ENCODE measurements at regions of chr12 and their contacts with region 1.

Region 1: DNA sequence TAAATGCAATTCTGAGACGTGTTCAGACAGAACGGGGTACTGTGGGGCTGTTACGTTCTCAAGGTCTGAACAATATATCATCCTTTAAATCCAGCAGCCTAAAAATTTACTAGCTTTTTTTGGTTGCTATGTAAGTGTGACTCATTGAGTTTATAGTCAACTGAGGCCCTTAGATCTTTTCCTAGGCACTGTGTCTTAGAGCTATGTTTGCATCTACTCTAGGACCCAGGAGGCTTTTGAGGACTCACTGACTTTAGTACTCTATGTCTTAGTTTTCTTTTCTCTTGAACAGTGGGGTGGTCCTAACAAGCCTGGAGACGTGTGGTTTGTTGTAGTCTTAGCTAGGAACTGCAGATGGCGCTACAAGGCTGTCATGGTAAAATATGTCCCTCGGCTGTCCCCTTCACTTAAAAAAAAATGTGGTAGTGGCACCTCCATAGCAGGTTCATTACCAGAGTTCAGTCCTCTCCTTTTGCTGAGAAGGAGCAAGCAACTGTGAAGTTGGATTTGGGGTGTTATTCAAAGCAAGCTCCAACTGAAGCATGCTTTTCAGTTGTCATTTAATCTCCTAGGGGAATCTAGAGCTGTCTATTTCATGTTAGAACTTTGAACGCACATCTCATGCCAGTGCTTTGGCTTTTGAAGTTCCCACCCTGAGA is 8.7 kb upstream of the SPATS2 start:
- DNase-seq: peak; percentile 63 to 70 (median 65)
- H3K4me3 ChIP-seq: no peak overlapping the region
- H3K4me3 Mint-ChIP-seq: no peak overlapping the region
- H3K27ac ChIP-seq: no peak overlapping the region
- H3K27ac Mint-ChIP-seq: no peak overlapping the region
- H3K4me1 ChIP-seq: no peaks in the 10 kb centered on the region
- H3K4me1 Mint-ChIP-seq: peaks cover 0 to 5% (median 4%) of the 10 kb centered on the region in 4 donors
- H3K27me3 ChIP-seq: peaks cover 6% of the 10 kb centered on the region
- H3K27me3 Mint-ChIP-seq: peaks cover 20 to 23% of the 10 kb centered on the region in 2 donors

Region 2: GRCh38 chr12:48924617-48925303 is 433.9 kb before region 1 on chr12:
- CTCF ChIA-PET with region 1: no interaction called
- POLR2A ChIA-PET with region 1: no interaction called
- intact Hi-C with region 1: no loop called
- DNase-seq: peak; percentile 79 to 85 (median 81)
- H3K4me3 ChIP-seq: peak overlapping the region; percentile 20 to 97
- H3K4me3 Mint-ChIP-seq: peak overlapping the region; percentile 95 to 98 (median 97)
- H3K27ac ChIP-seq: peak overlapping the region; percentile 95
- H3K27ac Mint-ChIP-seq: peak overlapping the region; percentile 96 to 100 (median 99)
- H3K4me1 ChIP-seq: peaks cover 34% of the 10 kb centered on the region
- H3K4me1 Mint-ChIP-seq: peaks cover 36 to 66% (median 52%) of the 10 kb centered on the region in 4 donors
- H3K27me3 ChIP-seq: no peaks in the 10 kb centered on the region
- H3K27me3 Mint-ChIP-seq: no peaks in the 10 kb centered on the region

Region 3: DNA sequence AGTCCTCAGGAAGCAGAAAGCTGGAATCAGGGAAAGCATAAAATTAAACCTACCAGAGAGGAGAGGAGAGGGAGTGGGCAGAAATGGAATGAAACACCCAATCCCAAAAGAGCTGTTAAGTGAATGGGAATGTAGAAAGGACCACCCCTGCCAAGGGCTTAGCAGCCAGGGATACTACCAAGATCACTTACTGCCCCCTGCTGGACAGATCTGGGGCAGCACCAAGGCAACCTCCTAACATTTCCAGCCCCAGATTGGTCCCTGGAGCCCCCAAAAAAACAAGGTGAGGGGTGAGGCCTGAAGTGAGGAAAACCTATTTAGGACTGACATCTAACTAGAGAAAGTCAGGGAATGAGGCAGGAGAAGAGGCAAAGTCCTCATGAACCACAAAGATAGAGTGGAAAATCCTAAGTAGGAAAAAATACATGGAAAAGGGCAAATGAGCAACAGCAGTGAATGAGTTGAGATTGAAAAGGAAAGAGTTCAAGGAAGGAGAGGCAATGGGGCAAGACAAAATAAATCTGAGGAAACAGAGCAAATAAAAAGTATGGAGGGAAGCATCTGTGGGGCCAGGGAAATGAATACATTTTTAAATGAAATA is 422.1 kb before region 1 on chr12:
- CTCF ChIA-PET with region 1: no interaction called
- POLR2A ChIA-PET with region 1: no interaction called
- intact Hi-C with region 1: no loop called
- DNase-seq: peak; percentile 74 to 82 (median 78)
- H3K4me3 ChIP-seq: no peak overlapping the region
- H3K4me3 Mint-ChIP-seq: no peak overlapping the region
- H3K27ac ChIP-seq: peak overlapping the region; percentile 71
- H3K27ac Mint-ChIP-seq: peak overlapping the region; percentile 86 to 97 (median 95)
- H3K4me1 ChIP-seq: peaks cover 45% of the 10 kb centered on the region
- H3K4me1 Mint-ChIP-seq: peaks cover 31 to 50% (median 38%) of the 10 kb centered on the region in 4 donors
- H3K27me3 ChIP-seq: no peaks in the 10 kb centered on the region
- H3K27me3 Mint-ChIP-seq: no peaks in the 10 kb centered on the region

Region 4: DNA sequence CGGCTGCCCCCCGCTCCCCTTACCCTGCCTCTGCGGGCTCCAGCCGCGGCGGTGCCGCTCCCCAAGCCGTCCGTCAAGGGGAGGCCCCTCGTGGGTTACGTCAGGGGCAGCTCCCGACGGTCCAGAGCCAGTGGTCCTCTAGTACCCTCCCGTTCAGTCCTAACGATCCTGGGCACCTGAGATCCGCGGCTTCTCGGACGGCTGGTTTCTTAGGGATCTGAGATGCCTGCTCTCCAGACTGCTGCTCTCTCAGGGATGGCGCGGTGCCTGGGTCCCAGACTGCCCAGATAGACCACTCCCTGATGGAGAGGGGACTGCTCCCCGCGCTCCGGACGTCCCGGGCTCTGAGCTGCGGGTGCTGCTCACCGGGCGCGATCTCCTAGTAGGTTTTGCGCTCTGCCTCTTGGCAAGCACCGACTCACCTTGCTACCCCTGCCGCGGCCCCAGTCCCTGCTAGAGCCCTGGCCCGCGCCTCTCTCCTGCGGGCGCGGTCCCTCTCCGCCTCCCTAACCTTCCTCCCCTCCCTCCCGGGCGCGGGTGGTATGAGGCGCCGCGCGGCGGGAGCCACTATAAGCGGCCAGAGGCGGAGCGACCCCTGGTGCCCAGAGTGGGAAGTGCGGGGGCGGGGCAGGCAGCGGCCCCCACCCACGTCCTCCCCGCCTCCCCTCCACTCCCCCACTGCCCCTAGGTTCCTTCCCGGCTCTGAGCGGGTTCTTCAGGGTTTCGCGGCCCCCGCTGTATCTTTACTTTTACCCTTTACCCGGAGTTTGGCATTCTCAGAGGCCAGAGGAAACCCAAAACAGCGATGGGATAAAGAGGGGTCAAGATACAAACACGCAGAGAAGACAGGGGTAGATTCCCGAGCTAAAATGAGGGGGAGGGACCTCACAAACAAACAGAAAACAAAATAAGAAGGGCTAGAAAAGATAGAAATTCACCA is 21.7 kb before region 1 on chr12 and contains the start of gene C1QL4:
- CTCF ChIA-PET with region 1: interaction called, 19 read pairs
- POLR2A ChIA-PET with region 1: no interaction called
- intact Hi-C with region 1: no loop called
- DNase-seq: peak; percentile 81 to 87 (median 81)
- H3K4me3 ChIP-seq: peak within 1 kb of the TSS in 1 of 2 donors; percentile 43
- H3K4me3 Mint-ChIP-seq: peak within 1 kb of the TSS; percentile 13 to 86 (median 70)
- H3K27ac ChIP-seq: no peak within 1 kb of the TSS
- H3K27ac Mint-ChIP-seq: peak within 1 kb of the TSS in 2 of 7 donors; percentile 24 to 52
- H3K4me1 ChIP-seq: peaks cover 22% of the 10 kb centered on the region
- H3K4me1 Mint-ChIP-seq: peaks cover 16 to 41% (median 23%) of the 10 kb centered on the region in 4 donors
- H3K27me3 ChIP-seq: peaks cover 37% of the 10 kb centered on the region
- H3K27me3 Mint-ChIP-seq: peaks cover 41 to 63% of the 10 kb centered on the region in 2 donors
- total RNA-seq, gene C1QL4: not detected

Region 5: GRCh38 chr12:49347384-49348237 is 11.0 kb before region 1 on chr12:
- CTCF ChIA-PET with region 1: interaction called, 51 read pairs
- POLR2A ChIA-PET with region 1: no interaction called
- intact Hi-C with region 1: no loop called
- DNase-seq: peak; percentile 70 to 81 (median 75)
- H3K4me3 ChIP-seq: peak overlapping the region; percentile 38 to 57
- H3K4me3 Mint-ChIP-seq: peak overlapping the region; percentile 81 to 92 (median 87)
- H3K27ac ChIP-seq: no peak overlapping the region
- H3K27ac Mint-ChIP-seq: peak overlapping the region in 2 of 7 donors; percentile 65 to 78
- H3K4me1 ChIP-seq: peaks cover 44% of the 10 kb centered on the region
- H3K4me1 Mint-ChIP-seq: peaks cover 15 to 44% (median 31%) of the 10 kb centered on the region in 4 donors
- H3K27me3 ChIP-seq: peaks cover 56% of the 10 kb centered on the region
- H3K27me3 Mint-ChIP-seq: peaks cover 25 to 46% of the 10 kb centered on the region in 2 donors

Region 6: GRCh38 chr12:49515266-49515665 is 156.7 kb after region 1 on chr12:
- CTCF ChIA-PET with region 1: interaction called, 538 read pairs
- POLR2A ChIA-PET with region 1: interaction called, 13 read pairs
- intact Hi-C with region 1: loop called (anchors 1 kb)
- DNase-seq: no peak
- H3K4me3 ChIP-seq: no peak overlapping the region
- H3K4me3 Mint-ChIP-seq: no peak overlapping the region
- H3K27ac ChIP-seq: no peak overlapping the region
- H3K27ac Mint-ChIP-seq: no peak overlapping the region
- H3K4me1 ChIP-seq: no peaks in the 10 kb centered on the region
- H3K4me1 Mint-ChIP-seq: no peaks in the 10 kb centered on the region
- H3K27me3 ChIP-seq: no peaks in the 10 kb centered on the region
- H3K27me3 Mint-ChIP-seq: no peaks in the 10 kb centered on the region

Region 7: DNA sequence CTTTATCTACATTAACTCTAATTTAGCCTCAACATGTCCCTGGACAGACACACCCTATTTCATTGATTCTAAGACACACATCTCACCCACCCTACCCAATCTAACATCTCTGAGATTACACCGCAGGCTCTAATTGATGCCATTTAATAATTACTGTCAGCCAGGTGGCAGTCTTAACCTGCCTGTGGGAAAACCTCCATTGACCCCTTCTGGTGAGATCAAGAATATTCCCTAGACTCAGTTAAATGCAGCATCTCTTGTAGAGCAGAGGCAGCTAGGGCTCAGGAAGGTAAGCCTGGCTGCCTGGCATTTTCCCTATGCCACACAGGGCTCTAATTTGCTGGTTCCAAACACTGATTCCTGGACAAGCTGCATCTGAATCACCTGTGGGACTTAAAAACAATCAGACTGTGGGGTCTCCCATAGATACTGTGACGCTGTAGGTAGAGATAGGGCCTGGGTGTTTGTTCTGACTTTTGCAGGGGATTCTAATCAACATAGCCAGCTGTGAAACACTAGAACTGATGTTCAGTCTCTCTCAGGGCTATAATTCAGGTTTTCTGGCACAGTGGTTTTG is 195.0 kb after region 1 on chr12:
- CTCF ChIA-PET with region 1: interaction called, 33 read pairs
- POLR2A ChIA-PET with region 1: no interaction called
- intact Hi-C with region 1: no loop called
- DNase-seq: peak in 4 of 5 donors; percentile 37 to 59 (median 50)
- H3K4me3 ChIP-seq: no peak overlapping the region
- H3K4me3 Mint-ChIP-seq: no peak overlapping the region
- H3K27ac ChIP-seq: no peak overlapping the region
- H3K27ac Mint-ChIP-seq: peak overlapping the region in 3 of 7 donors; percentile 14 to 54 (median 21)
- H3K4me1 ChIP-seq: peaks cover 4% of the 10 kb centered on the region
- H3K4me1 Mint-ChIP-seq: peaks cover 5 to 11% (median 8%) of the 10 kb centered on the region in 4 donors
- H3K27me3 ChIP-seq: peaks cover 3% of the 10 kb centered on the region
- H3K27me3 Mint-ChIP-seq: peaks cover 3 to 12% of the 10 kb centered on the region in 2 donors

Region 8: DNA sequence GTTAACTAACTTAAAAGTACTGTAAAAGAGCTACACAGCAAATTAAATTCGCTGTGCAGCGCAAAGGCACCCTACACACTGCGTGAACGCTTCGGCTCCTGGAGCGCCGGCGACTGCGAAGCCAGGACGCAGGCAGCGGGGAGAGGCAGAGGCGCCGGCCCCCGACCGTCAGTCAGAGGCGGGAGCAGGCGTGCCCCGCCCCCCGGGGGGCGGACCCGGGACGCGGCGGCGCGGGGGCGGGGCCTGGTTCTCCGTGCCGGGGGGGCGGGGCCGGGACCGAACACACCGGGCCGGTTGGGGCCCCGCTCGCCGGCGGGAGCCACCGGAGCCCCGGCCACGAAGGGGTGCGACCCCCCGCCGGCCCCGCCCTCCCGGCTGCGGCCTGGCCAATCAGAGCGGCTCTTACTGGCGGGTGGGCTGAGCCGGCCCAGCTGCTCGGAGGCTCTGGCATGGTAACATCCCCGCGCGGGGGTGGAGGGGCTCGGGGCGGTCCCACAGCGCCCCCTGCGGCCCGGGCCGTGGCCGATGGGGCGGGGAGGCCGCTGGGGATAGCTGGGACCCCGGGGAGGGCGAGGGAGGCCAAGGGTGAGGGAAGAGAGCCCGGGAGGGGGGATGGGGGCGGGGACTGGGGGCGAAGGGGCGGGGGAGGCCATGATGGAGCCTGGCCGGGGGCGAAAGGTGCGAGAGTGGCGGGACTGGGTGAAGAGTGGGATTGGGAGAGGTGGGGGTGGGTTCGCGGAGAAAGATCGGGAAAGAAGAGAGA is 264.7 kb after region 1 on chr12 and contains the start of gene PRPF40B:
- CTCF ChIA-PET with region 1: interaction called, 14 read pairs
- POLR2A ChIA-PET with region 1: interaction called, 6 read pairs
- intact Hi-C with region 1: no loop called
- DNase-seq: peak; percentile 88 to 90 (median 89)
- H3K4me3 ChIP-seq: peak within 1 kb of the TSS; percentile 73 to 94
- H3K4me3 Mint-ChIP-seq: peak within 1 kb of the TSS; percentile 87 to 93 (median 90)
- H3K27ac ChIP-seq: peak within 1 kb of the TSS; percentile 65
- H3K27ac Mint-ChIP-seq: peak within 1 kb of the TSS; percentile 93 to 98 (median 94)
- H3K4me1 ChIP-seq: peaks cover 22% of the 10 kb centered on the region
- H3K4me1 Mint-ChIP-seq: peaks cover 15 to 42% (median 21%) of the 10 kb centered on the region in 4 donors
- H3K27me3 ChIP-seq: no peaks in the 10 kb centered on the region
- H3K27me3 Mint-ChIP-seq: no peaks in the 10 kb centered on the region
- total RNA-seq, gene PRPF40B: 15.1 to 15.9 TPM

Measured in CD4-positive, alpha-beta memory T cell (primary cell).